Calu3 (cell line): ENCODE measurements at regions of chr15 and their contacts with region 1.

Region 1: GRCh38 chr15:46312133-46312740 is 677.4 kb downstream of the SQOR start:
- DNase-seq: peak; percentile 76
- H3K4me3 Mint-ChIP-seq: no peak overlapping the region
- H3K27ac Mint-ChIP-seq: no peak overlapping the region
- H3K4me1 Mint-ChIP-seq: no peaks in the 10 kb centered on the region
- H3K27me3 Mint-ChIP-seq: no peaks in the 10 kb centered on the region
- CTCF ChIP-seq: peak; percentile 47

Region 2: DNA sequence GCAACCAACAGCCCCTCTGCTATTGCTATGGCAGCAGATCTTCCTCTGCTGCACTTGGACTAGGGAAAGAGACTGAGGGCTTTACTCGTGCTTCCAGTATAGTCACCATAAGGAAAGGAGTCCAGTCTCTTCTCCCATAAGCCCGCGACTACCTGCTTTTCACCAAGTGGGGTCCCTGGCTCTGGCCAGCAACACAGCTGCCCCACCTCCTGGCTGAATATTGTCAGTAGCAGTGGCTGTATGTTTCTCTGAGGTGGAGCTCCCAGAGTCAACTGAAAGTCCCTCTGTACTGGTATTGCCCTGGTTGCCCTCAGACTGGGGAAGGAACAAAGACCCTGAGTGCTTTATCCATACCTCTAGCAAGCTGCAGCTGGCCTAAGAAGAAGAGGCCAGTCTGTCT is 42.2 kb after region 1 on chr15:
- CTCF ChIA-PET with region 1: no interaction called
- intact Hi-C with region 1: no loop called
- DNase-seq: no peak
- H3K4me3 Mint-ChIP-seq: no peak overlapping the region
- H3K27ac Mint-ChIP-seq: no peak overlapping the region
- H3K4me1 Mint-ChIP-seq: no peaks in the 10 kb centered on the region
- H3K27me3 Mint-ChIP-seq: no peaks in the 10 kb centered on the region
- CTCF ChIP-seq: no peak

Region 3: DNA sequence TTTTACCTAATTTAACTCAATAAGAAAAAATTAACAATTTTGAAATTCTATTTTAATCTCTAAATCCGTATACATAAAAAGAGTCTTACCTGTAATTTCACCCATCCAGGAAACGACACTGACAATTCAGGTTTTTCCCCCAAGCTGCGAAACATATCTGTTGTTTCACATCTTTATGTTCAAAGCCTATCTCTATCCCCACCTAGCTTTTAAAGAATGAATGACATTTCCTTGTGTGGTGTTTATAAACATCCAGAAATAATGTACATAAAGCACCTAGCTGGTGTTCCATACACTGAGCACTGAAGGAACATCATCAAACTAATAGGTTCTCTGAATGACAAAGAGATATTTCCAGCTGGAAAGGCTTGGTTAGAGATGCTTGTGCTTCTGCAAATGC is 190.4 kb after region 1 on chr15:
- CTCF ChIA-PET with region 1: no interaction called
- intact Hi-C with region 1: loop called (anchors 5 kb)
- DNase-seq: no peak
- H3K4me3 Mint-ChIP-seq: no peak overlapping the region
- H3K27ac Mint-ChIP-seq: no peak overlapping the region
- H3K4me1 Mint-ChIP-seq: no peaks in the 10 kb centered on the region
- H3K27me3 Mint-ChIP-seq: no peaks in the 10 kb centered on the region
- CTCF ChIP-seq: no peak